CD4-positive, alpha-beta memory T cell (primary cell): ENCODE measurements at regions of chr19 and their contacts with region 1.

Region 1: GRCh38 chr19:3557461-3558248 is at the start of gene MFSD12:
- DNase-seq: peak; percentile 90 to 94 (median 93)
- H3K4me3 ChIP-seq: peak within 1 kb of the TSS; percentile 81 to 84
- H3K4me3 Mint-ChIP-seq: peak within 1 kb of the TSS; percentile 92 to 99 (median 96)
- H3K27ac ChIP-seq: peak within 1 kb of the TSS; percentile 74
- H3K27ac Mint-ChIP-seq: peak within 1 kb of the TSS; percentile 92 to 99 (median 97)
- H3K4me1 ChIP-seq: peaks cover 47% of the 10 kb centered on the region
- H3K4me1 Mint-ChIP-seq: peaks cover 21 to 42% (median 32%) of the 10 kb centered on the region in 4 donors
- H3K27me3 ChIP-seq: no peaks in the 10 kb centered on the region
- H3K27me3 Mint-ChIP-seq: peaks cover 0 to 1% of the 10 kb centered on the region in 2 donors
- total RNA-seq, gene MFSD12: 128 to 136 TPM

Region 2: GRCh38 chr19:3500429-3501130 is 57.1 kb before region 1 on chr19 and contains the start of gene DOHH:
- CTCF ChIA-PET with region 1: no interaction called
- POLR2A ChIA-PET with region 1: interaction called, 10 read pairs
- intact Hi-C with region 1: no loop called
- DNase-seq: peak; percentile 94 to 96 (median 95)
- H3K4me3 ChIP-seq: peak within 1 kb of the TSS; percentile 64 to 87
- H3K4me3 Mint-ChIP-seq: peak within 1 kb of the TSS; percentile 82 to 98 (median 93)
- H3K27ac ChIP-seq: peak within 1 kb of the TSS; percentile 85
- H3K27ac Mint-ChIP-seq: peak within 1 kb of the TSS; percentile 91 to 100 (median 95)
- H3K4me1 ChIP-seq: peaks cover 32% of the 10 kb centered on the region
- H3K4me1 Mint-ChIP-seq: peaks cover 21 to 42% (median 26%) of the 10 kb centered on the region in 4 donors
- H3K27me3 ChIP-seq: no peaks in the 10 kb centered on the region
- H3K27me3 Mint-ChIP-seq: no peaks in the 10 kb centered on the region
- total RNA-seq, gene DOHH: 8.3 TPM

Region 3: GRCh38 chr19:3505598-3506383 is 51.9 kb before region 1 on chr19 and contains the start of gene FZR1:
- CTCF ChIA-PET with region 1: no interaction called
- POLR2A ChIA-PET with region 1: interaction called, 10 read pairs
- intact Hi-C with region 1: loop called (anchors 2 kb)
- DNase-seq: peak; percentile 99 to 100 (median 100)
- H3K4me3 ChIP-seq: peak within 1 kb of the TSS; percentile 73 to 77
- H3K4me3 Mint-ChIP-seq: peak within 1 kb of the TSS; percentile 87 to 96 (median 92)
- H3K27ac ChIP-seq: peak within 1 kb of the TSS; percentile 91
- H3K27ac Mint-ChIP-seq: peak within 1 kb of the TSS; percentile 96 to 99 (median 97)
- H3K4me1 ChIP-seq: peaks cover 52% of the 10 kb centered on the region
- H3K4me1 Mint-ChIP-seq: peaks cover 33 to 62% (median 46%) of the 10 kb centered on the region in 4 donors
- H3K27me3 ChIP-seq: no peaks in the 10 kb centered on the region
- H3K27me3 Mint-ChIP-seq: no peaks in the 10 kb centered on the region
- total RNA-seq, gene FZR1: 73.3 to 73.7 TPM

Region 4: DNA sequence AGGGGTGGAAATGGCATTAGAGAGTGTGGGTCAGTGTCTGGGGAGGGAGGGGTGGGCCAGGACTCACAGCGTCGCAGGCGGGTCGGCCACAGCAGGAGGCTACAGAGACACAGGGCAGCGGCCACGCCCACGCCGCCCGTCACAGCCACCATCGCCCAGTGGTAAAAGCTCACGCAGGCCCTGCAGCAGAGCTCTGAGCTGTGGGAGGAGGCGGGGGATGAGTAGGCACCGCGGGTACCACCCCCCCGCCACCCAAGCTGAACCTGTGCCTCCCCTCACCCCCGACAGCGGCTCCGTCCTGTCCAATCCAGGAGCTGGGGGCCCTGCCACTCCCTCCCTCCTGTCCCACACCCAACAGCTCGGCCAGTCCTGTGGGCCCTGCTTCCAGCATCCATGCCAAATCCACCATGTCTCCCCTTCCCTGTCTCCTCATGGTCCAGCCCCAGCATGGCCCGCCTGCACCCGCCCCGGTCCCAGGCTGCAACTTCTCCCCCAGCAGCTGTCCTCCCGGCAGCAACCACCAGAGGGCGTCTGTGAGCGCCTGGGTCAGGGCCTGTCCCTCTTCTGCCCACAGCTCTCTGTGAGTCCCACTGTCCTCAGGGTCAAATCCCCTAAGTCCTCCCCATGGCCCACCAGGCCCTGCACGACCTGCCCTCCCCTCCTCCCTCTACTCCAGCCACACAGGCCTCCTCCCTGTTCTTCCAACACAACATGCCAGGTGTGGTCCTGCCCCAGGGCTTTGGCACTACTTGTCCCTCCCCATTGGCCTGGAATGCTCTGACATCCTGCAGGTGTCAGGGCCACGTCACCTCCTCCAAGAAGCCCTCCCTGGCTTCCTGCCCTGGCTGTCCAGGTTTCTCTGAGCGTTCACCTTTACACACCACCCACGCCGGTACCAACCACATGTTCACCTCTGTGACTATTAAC is 12.7 kb before region 1 on chr19:
- CTCF ChIA-PET with region 1: interaction called, 49 read pairs
- POLR2A ChIA-PET with region 1: interaction called, 39 read pairs
- intact Hi-C with region 1: loop called (anchors 1 kb)
- DNase-seq: peak; percentile 67 to 80 (median 69)
- H3K4me3 ChIP-seq: no peak overlapping the region
- H3K4me3 Mint-ChIP-seq: no peak overlapping the region
- H3K27ac ChIP-seq: no peak overlapping the region
- H3K27ac Mint-ChIP-seq: peak overlapping the region; percentile 35 to 78 (median 74)
- H3K4me1 ChIP-seq: peaks cover 7% of the 10 kb centered on the region
- H3K4me1 Mint-ChIP-seq: peaks cover 5 to 12% (median 9%) of the 10 kb centered on the region in 4 donors
- H3K27me3 ChIP-seq: no peaks in the 10 kb centered on the region
- H3K27me3 Mint-ChIP-seq: no peaks in the 10 kb centered on the region

Region 5: DNA sequence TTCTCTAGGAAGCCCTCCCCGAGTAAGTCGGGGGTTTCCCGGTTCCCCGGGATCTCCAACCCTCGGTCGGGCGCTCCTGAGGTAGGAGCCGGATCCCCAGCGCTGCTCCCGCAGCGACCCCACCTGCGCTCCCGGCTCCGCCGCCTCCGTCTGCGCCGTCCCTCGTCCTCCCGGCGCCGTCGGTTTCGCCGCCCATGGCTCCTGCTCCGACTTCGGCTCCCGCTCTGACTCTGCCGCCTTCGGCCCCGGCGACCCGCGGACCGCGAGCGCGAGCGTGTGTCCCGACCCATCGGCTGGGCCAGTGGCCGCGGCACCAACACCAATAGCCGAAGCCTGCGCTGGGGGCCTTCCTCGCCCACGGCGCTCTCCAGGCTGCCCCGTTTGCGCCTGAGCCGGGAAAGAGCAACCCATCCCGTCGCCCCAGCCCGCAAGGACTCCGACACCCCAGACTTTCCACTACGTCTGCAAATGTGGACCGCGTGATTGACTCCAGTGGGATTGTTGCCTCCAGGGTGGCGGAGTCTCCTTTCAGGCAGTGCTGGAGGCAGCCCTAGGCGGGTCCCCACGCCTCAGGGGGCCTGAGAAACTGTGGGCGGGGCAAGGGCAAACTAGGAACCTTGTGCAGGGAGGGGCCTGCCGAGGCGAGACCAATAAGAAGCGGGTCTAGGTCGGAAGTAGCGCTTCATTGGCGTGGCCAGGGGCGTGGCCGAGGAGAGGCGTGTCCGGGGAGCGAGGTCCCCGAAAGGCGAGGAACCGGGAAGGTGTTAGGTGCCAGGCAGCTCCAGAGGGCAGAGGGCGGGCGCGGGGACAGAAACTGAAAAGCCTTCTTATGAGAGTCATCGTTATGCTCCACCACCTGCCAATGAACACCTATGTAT is 69.1 kb after region 1 on chr19 and contains the start of gene CACTIN:
- CTCF ChIA-PET with region 1: no interaction called
- POLR2A ChIA-PET with region 1: interaction called, 7 read pairs
- intact Hi-C with region 1: loop called (anchors 1 kb)
- DNase-seq: peak; percentile 98 to 100 (median 99)
- H3K4me3 ChIP-seq: peak within 1 kb of the TSS; percentile 76 to 79
- H3K4me3 Mint-ChIP-seq: peak within 1 kb of the TSS; percentile 86 to 98 (median 96)
- H3K27ac ChIP-seq: peak within 1 kb of the TSS; percentile 87
- H3K27ac Mint-ChIP-seq: peak within 1 kb of the TSS; percentile 98 to 100 (median 99)
- H3K4me1 ChIP-seq: peaks cover 27% of the 10 kb centered on the region
- H3K4me1 Mint-ChIP-seq: peaks cover 13 to 34% (median 25%) of the 10 kb centered on the region in 4 donors
- H3K27me3 ChIP-seq: no peaks in the 10 kb centered on the region
- H3K27me3 Mint-ChIP-seq: no peaks in the 10 kb centered on the region
- total RNA-seq, gene CACTIN: 44.0 to 50.4 TPM